Gastrocnemius medialis (tissue), 4 donors: ENCODE measurements at regions of chr2 and their contacts with region 1.

Region 1: DNA sequence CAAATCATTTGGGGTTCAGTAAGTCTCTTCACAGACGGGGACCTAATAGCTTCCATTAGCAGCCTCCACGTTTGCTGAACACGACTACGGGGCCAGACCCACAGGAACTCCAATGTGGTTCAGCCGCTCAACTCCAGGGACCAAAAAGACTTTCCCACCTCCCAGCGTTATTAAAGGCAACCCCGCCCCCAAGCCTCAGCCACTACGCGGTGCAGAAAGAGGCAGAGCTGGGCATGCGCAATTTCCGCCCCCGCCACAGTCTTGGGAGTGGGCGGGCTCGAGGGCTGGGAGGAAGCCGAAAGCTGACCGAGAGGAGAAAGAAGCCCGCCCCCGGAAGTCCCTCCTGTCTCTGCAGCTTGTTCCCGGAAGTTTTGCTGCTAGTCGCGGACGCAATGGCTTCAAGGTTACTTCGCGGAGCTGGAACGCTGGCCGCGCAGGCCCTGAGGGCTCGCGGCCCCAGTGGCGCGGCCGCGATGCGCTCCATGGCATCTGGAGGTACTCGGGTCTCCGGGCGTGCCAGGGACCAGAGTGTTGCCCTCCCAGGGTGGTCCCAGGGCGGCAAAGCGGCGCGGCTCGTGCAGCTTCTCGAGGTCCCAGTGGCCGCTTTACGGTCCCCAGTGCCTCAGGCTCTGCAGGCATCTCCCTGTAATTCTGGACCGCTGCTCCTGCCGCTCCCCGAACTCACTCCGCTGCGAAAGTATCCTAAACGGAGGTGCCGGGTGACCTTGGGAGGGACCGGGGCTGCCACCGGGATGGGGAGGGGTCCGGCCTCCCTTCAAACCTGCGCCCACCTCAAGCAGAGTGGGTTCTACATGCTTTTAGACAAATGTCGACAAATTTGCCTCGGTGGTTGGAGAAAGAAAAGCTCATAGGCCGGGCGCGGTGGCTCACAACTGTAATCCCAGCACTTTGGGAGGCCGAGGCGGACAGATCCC is at the start of gene COX5B:
- DNase-seq: peak; percentile 98
- ATAC-seq: peak; percentile 98
- H3K4me3 ChIP-seq: peak within 1 kb of the TSS; percentile 85 to 97 (median 94)
- H3K27ac ChIP-seq: peak within 1 kb of the TSS; percentile 90 to 98 (median 98)
- H3K4me1 ChIP-seq: peaks cover 15% of the 10 kb centered on the region in 2 donors
- H3K27me3 ChIP-seq: no peaks in the 10 kb centered on the region
- CTCF ChIP-seq: peak in 1 of 5 experiments; percentile 23
- POLR2A ChIP-seq: peak; percentile 78 to 84
- total RNA-seq, gene COX5B: 742 to 1,417 (median 1,247) TPM

Region 2: GRCh38 chr2:97663965-97664635 is 18.1 kb after region 1 on chr2 and contains the start of gene ACTR1B:
- in situ Hi-C with region 1: no loop called
- intact Hi-C with region 1: loop called (anchors 1 kb)
- DNase-seq: peak; percentile 97 to 98
- ATAC-seq: peak; percentile 95 to 96
- H3K4me3 ChIP-seq: peak within 1 kb of the TSS; percentile 59 to 94 (median 82)
- H3K27ac ChIP-seq: peak within 1 kb of the TSS; percentile 86 to 98 (median 92)
- H3K4me1 ChIP-seq: peaks cover 23 to 29% of the 10 kb centered on the region in 2 donors
- H3K27me3 ChIP-seq: no peaks in the 10 kb centered on the region
- CTCF ChIP-seq: peak; percentile 55 to 73 (median 67)
- POLR2A ChIP-seq: peak; percentile 75 to 93
- total RNA-seq, gene ACTR1B: 53.5 to 76.1 (median 56.5) TPM